Activated T-helper 2 cell treated with anti-CD3 and anti-CD28 coated beads, Interferon-gamma antibody, Interleukin-2, Interleukin-4, amounts not matched to agents 10 μg/mL and 5 μg/mL and 100 μg/mL, durations not matched to agents 14 hours and 24 hours and 36 hours (primary cell): ENCODE measurements at regions of chr6 and their contacts with region 1.

Region 1: GRCh38 chr6:20334334-20334733 is 67.3 kb upstream of the E2F3 start:
- DNase-seq: no peak
- H3K4me3 Mint-ChIP-seq: no peak overlapping the region
- H3K27ac Mint-ChIP-seq: no peak overlapping the region
- H3K4me1 Mint-ChIP-seq: peaks cover 39% of the 10 kb centered on the region
- H3K27me3 Mint-ChIP-seq: peaks cover 7% of the 10 kb centered on the region

Region 2: GRCh38 chr6:20202324-20202658 is 132.0 kb before region 1 on chr6:
- intact Hi-C with region 1: loop called (anchors 5 kb)
- DNase-seq: no peak
- H3K4me3 Mint-ChIP-seq: no peak overlapping the region
- H3K27ac Mint-ChIP-seq: peak overlapping the region; percentile 96
- H3K4me1 Mint-ChIP-seq: peaks cover 73% of the 10 kb centered on the region
- H3K27me3 Mint-ChIP-seq: no peaks in the 10 kb centered on the region

Region 3: GRCh38 chr6:20319520-20320357 is 14.6 kb before region 1 on chr6:
- intact Hi-C with region 1: loop called (anchors 2 kb)
- DNase-seq: peak; percentile 76
- H3K4me3 Mint-ChIP-seq: peak overlapping the region; percentile 81
- H3K27ac Mint-ChIP-seq: peak overlapping the region; percentile 97
- H3K4me1 Mint-ChIP-seq: peaks cover 20% of the 10 kb centered on the region
- H3K27me3 Mint-ChIP-seq: peaks cover 18% of the 10 kb centered on the region

Region 4: GRCh38 chr6:20352346-20352745 is 18.0 kb after region 1 on chr6:
- intact Hi-C with region 1: loop called (anchors 1 kb)
- DNase-seq: no peak
- H3K4me3 Mint-ChIP-seq: no peak overlapping the region
- H3K27ac Mint-ChIP-seq: peak overlapping the region; percentile 55
- H3K4me1 Mint-ChIP-seq: peaks cover 34% of the 10 kb centered on the region
- H3K27me3 Mint-ChIP-seq: no peaks in the 10 kb centered on the region

Region 5: GRCh38 chr6:20366091-20366832 is 31.9 kb after region 1 on chr6:
- intact Hi-C with region 1: loop called (anchors 2 kb)
- DNase-seq: peak; percentile 34
- H3K4me3 Mint-ChIP-seq: peak overlapping the region; percentile 64
- H3K27ac Mint-ChIP-seq: peak overlapping the region; percentile 93
- H3K4me1 Mint-ChIP-seq: peaks cover 64% of the 10 kb centered on the region
- H3K27me3 Mint-ChIP-seq: no peaks in the 10 kb centered on the region

Region 6: GRCh38 chr6:20873425-20874190 is 539.3 kb after region 1 on chr6:
- intact Hi-C with region 1: no loop called
- DNase-seq: no peak
- H3K4me3 Mint-ChIP-seq: no peak overlapping the region
- H3K27ac Mint-ChIP-seq: no peak overlapping the region
- H3K4me1 Mint-ChIP-seq: peaks cover 18% of the 10 kb centered on the region
- H3K27me3 Mint-ChIP-seq: no peaks in the 10 kb centered on the region